A549 (cell line): ENCODE measurements at regions of chr5 and their contacts with region 1.

Region 1: DNA sequence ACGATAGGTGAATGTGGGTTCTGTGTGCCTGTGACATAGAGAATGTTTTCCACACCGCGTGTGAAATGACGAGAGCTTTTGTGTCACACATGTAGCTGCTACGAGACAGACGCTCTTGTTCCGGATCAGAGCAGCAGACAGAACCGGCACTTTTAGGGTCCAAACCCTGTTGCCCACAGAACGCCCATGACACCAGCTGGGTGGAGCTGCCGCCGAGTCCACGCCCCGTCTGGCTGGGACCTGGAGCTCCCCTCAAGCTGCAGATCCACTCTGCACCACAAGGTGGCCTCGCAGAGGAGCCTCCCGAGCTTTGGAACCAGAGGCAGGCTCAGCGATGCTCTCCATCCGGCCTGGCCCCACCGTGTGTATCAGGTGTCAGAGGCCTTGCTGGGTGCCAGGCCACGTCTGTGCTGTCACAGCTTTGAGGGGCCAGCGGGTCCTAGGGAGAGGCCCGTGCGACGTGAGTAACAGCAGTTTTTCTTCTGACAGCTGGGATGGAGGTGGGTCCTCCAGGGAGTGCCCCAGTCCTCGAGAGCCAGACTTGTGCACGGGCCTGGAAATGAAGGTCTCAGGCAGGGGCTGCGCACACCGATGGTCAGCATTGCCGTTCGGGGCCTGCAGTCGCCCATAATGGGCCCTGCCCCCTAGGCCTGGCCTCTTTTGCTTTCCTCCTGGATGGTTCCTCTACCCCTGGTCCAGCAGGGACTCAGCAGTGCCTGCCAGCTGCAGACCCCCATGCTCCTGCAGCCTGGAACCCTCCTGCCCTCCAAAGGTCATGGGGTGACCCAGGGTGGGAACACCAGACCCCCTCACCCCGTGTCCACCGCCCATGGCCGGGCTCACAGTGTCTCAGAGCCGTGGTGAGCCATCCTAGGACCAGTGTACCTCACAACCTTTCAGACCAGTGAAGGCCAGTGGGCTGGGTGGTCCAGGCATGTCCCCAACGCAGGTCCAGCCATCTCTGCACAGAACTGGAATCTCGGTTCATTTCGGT is 2.5 kb upstream of the LRRC14B start:
- DNase-seq: peak; percentile 77 to 89
- ATAC-seq: peak; percentile 88 to 96
- H3K4me3 ChIP-seq: no peak overlapping the region
- H3K27ac ChIP-seq: peak overlapping the region in 1 of 2 experiments; percentile 46; a peak in 2 of 6 replicates
- H3K4me1 ChIP-seq: no peaks in the 10 kb centered on the region
- CTCF ChIP-seq: peak; percentile 59
- EP300 ChIP-seq: no peak
- POLR2A ChIP-seq: no peak
- RAD21 ChIP-seq: peak; percentile 54 to 55

Region 2: DNA sequence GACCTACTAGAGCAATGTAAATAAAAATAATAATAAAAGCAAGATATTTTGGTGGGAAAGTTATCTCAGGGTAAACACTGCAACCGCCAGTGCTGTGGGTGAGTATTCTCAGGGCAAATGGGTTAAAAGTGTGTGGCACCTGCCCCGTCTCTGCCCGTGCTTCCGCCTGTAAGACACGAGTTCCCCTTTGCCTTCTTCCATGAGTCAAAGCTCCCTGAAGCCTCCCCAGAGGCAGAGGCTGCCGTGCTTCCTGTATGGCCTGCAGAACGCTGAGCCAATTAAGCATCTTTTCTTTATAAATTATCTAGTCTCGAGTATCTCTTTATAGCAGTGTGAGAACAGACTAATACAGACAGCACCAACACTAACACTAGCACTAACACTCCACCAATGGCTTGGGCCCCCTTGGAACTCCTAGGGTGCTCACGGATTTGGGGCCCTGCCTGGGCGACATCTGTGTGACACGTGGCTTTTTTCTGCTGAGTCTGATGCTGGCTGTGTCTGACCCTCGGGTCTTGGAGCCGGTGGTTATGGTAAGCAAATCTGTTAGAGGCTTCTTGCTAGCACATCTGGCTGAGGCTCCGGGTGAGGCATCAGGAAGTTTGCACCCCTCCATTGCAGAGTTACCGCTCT is 86.3 kb before region 1 on chr5:
- CTCF ChIA-PET with region 1: no interaction called
- POLR2A ChIA-PET with region 1: no interaction called
- DNase-seq: no peak
- ATAC-seq: no peak
- H3K4me3 ChIP-seq: no peak overlapping the region
- H3K27ac ChIP-seq: no peak overlapping the region
- H3K4me1 ChIP-seq: no peaks in the 10 kb centered on the region
- CTCF ChIP-seq: no peak
- EP300 ChIP-seq: no peak
- POLR2A ChIP-seq: no peak
- RAD21 ChIP-seq: no peak

Region 3: DNA sequence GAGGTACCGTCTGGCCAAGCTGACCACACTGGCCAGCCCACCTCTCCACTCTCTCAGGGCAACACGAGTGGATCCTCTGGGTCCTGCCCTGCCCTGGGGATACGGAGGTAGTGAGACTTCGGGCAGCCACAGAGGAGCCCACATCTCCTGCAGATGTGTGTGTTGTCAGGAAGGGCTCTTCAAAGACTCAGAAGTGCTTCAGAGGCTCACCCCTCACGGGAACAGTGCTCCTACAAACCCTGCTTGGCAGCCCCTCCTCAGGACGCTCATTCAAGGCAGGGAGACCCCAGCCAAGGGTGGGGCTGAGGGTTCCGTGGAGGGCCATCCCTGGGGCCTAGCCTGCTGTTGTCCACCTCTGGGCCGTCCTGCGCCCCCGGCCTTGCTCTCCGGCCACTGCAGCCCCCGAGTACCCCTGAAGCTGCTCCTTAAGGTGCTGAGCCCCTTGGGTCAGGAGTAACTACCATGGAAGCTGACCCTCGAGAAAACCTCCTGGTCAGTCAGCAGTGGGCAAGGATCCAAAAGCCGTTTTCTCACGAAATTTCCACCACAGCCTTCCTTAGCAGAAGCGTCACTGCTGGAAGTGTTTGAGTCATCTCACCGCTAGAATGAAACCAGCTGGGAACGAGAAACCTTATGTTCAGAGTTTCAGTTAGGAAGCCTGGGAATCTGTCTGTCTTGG is 20.7 kb before region 1 on chr5:
- CTCF ChIA-PET with region 1: interaction called, 13 read pairs
- POLR2A ChIA-PET with region 1: no interaction called
- DNase-seq: no peak
- ATAC-seq: no peak
- H3K4me3 ChIP-seq: no peak overlapping the region
- H3K27ac ChIP-seq: no peak overlapping the region
- H3K4me1 ChIP-seq: no peaks in the 10 kb centered on the region
- CTCF ChIP-seq: no peak
- EP300 ChIP-seq: no peak
- POLR2A ChIP-seq: no peak
- RAD21 ChIP-seq: no peak

Region 4: DNA sequence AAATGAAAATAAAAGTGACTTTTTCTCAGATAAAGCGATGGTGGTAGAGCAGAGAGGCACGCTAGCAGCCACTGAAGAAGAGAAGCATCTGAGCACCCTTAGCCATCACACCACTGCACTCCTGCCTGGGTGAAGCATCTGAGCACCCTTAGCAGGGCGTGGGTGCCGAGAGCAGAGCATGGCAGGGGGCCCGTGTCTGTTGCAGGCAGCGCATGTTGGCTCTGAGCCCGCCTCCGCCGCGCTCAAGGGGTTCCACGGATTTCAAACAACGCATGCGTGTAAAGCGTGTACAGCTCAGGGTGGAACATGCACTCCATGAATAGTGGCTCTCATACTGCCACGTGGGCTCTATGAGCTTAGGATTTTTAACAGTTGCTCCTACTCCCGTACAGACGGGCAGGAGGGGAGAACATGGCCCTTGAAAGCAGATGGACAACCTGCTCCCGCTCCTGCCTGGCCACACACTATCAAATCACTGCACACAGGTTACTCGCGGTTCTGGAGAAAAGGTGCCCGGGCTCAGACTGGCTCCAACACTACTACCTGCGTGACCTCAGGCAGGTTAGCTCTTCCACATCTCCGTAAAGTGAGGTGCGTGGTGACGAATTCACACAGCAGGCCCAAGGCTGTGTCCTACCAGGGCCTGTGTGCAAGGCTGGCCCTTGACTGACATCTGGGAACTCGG is 14.6 kb after region 1 on chr5:
- CTCF ChIA-PET with region 1: interaction called, 15 read pairs
- POLR2A ChIA-PET with region 1: no interaction called
- DNase-seq: no peak
- ATAC-seq: no peak
- H3K4me3 ChIP-seq: no peak overlapping the region
- H3K27ac ChIP-seq: no peak overlapping the region
- H3K4me1 ChIP-seq: no peaks in the 10 kb centered on the region; the same call in 2 of the 3 replicates
- CTCF ChIP-seq: no peak
- EP300 ChIP-seq: no peak
- POLR2A ChIP-seq: no peak
- RAD21 ChIP-seq: no peak

Region 5: GRCh38 chr5:217860-218456 is 29.2 kb after region 1 on chr5 and contains the starts of genes CCDC127 and SDHA:
- CTCF ChIA-PET with region 1: interaction called, 11 read pairs
- POLR2A ChIA-PET with region 1: interaction called, 6 read pairs
- DNase-seq: peak; percentile 91 to 99
- ATAC-seq: peak; percentile 88 to 94
- H3K4me3 ChIP-seq: peak within 1 kb of the TSS; percentile 99
- H3K27ac ChIP-seq: peak within 1 kb of the TSS; percentile 85 to 97
- H3K4me1 ChIP-seq: peaks cover 20% of the 10 kb centered on the region
- CTCF ChIP-seq: peak; percentile 60
- EP300 ChIP-seq: no peak
- POLR2A ChIP-seq: peak; percentile 80
- RAD21 ChIP-seq: no peak
- polyA plus RNA-seq, gene CCDC127: 5.1 and 5.2 TPM in 2 replicates
- polyA plus RNA-seq, gene SDHA: 115 and 122 TPM in 2 replicates